Astrocyte of the cerebellum (primary cell): ENCODE measurements at regions of chr6 and their contacts with region 1.

Region 1: GRCh38 chr6:163427498-163428254 is 13.2 kb downstream of the QKI start:
- DNase-seq: peak; percentile 75
- H3K4me3 ChIP-seq: no peak overlapping the region
- CTCF ChIP-seq: no peak

Region 2: DNA sequence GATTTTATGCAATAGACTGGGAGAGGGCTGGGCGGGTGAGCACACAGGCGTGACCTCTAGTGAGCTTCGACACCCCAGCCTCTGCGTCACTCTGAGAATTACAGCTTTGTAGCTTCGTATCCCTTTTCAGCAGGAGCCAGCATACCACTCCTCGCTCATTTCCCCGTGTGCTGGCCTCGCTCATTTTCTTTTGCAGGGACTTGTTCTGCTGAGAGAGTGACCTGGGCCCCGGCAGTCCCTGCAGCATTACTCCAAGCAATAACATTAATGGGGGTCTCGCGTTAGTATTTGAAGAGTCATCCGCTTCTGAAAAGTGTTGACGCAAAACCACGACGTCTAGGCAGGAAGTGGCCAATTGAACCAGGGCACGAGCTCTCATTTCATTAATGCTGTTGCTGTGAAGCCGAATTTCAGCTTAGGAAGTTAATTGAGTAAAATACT is 180.5 kb after region 1 on chr6:
- in situ Hi-C with region 1: no loop called
- DNase-seq: no peak
- H3K4me3 ChIP-seq: no peak overlapping the region
- CTCF ChIP-seq: no peak

Region 3: DNA sequence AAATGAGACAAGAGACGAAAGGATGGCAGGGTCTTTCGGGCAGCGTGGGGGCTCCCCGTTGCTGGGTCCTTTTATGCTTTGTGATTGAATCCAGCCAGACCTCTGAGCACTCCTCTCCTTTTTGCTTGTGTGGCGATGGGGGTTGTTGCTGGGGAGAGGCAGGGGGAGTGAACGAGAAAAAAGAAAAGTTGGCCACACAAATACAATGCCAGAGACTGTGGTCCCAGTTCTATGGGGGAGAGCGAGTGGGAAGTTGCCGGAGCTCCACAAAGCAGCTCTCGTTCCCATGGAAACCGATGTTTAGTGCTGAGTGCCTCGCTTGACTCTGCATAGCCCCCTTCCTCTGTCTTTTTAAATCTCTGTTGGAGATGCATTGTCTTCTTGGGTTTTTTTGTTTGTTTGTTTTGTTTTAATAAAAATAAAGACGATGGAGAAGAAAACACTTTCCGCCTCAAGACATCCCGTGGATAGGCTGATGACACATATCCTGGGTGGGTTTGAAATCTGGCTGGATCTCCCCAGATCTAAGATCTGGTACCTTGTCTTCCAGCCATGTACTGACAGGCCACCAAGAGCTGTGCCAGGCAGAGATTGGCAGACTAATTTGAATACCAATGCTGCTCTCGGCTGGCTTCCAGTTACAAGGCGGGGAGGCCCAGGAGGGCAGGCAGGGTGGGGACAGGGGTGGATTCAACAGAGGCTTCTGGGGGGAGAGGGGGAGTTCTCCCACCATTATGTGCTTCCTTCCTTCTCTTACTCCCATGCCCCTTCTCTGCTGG is 516.1 kb after region 1 on chr6:
- in situ Hi-C with region 1: loop called (anchors 25 kb)
- DNase-seq: peak; percentile 46
- H3K4me3 ChIP-seq: peak overlapping the region; percentile 19
- CTCF ChIP-seq: no peak